Heart right ventricle (tissue), 16 donors: ENCODE measurements at regions of chr2 and their contacts with region 1.

Region 1: DNA sequence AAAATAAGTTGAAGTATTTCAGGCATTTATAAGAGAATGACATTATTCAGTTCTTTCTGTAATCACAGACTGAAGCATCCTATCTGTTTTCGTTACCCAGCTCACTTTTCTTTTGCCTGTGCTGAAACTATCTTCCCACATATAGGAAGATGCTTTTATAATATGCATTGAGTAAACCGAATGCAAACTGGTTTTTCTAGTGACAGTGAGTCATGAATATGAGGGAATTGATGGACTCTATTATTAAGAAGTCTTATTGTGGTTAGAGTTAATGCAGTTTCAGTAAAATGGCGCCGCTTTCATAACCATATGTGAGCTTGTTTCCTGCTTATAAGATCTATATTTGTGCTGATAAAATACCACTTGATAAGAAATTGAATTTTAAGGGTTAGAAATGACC is 59.2 kb downstream of the ACVR2A start:
- DNase-seq: no peak
- ATAC-seq: no peak
- H3K4me3 ChIP-seq: no peak overlapping the region
- H3K27ac ChIP-seq: no peak overlapping the region
- H3K4me1 ChIP-seq: no peaks in the 10 kb centered on the region
- H3K27me3 ChIP-seq: no peaks in the 10 kb centered on the region
- CTCF ChIP-seq: no peak

Region 2: DNA sequence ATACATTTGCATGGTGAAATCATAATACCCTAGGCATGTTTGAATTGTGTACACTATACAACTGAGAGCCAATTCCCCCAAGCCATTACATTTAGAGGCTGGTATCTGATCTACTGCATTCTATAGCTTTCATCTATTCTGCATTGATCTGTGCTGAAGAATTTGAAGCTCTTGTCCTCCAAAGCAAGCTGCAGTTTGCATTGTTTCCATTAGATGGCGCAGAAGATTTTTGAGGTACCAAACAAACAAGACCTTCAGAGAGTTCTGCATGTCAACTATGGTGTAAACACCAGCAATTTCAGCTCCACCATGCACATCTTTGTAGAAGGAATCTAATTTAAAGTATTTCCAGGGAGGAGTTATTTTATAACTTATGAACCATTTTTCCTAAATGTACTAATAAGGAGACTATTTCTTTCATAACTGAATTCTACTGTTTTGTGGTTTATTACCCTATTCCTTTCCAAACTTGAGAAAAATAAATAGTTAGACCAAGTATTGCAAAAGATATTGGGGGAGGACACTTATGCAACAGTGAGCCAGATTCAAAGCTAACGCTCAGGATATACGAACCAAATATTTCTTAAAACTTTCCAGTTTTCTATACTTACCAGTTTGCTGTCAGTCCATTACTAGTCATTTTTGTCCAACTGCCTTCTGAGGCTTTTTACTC is 821.1 kb before region 1 on chr2:
- intact Hi-C with region 1: loop called in 1 of 10 experiments (anchors 10 kb)
- DNase-seq: peak in 1 of 2 donors; percentile 55
- ATAC-seq: peak in 5 of 8 donors; percentile 38 to 69 (median 42)
- H3K4me3 ChIP-seq: no peak overlapping the region
- H3K27ac ChIP-seq: no peak overlapping the region
- H3K4me1 ChIP-seq: peaks cover 0 to 18% (median 0%) of the 10 kb centered on the region in 9 donors
- H3K27me3 ChIP-seq: no peaks in the 10 kb centered on the region
- CTCF ChIP-seq: peak; percentile 62 to 89 (median 84)

Region 3: GRCh38 chr2:147800316-147800715 is 103.7 kb before region 1 on chr2:
- intact Hi-C with region 1: no loop called
- DNase-seq: no peak
- ATAC-seq: no peak
- H3K4me3 ChIP-seq: no peak overlapping the region
- H3K27ac ChIP-seq: no peak overlapping the region
- H3K4me1 ChIP-seq: peaks cover 0 to 7% (median 0%) of the 10 kb centered on the region in 9 donors
- H3K27me3 ChIP-seq: no peaks in the 10 kb centered on the region
- CTCF ChIP-seq: no peak

Region 4: GRCh38 chr2:147829106-147829505 is 74.9 kb before region 1 on chr2:
- intact Hi-C with region 1: no loop called
- DNase-seq: no peak
- ATAC-seq: peak in 1 of 8 donors; percentile 33
- H3K4me3 ChIP-seq: no peak overlapping the region
- H3K27ac ChIP-seq: no peak overlapping the region
- H3K4me1 ChIP-seq: peaks cover 0 to 5% (median 0%) of the 10 kb centered on the region in 9 donors
- H3K27me3 ChIP-seq: no peaks in the 10 kb centered on the region
- CTCF ChIP-seq: no peak

Region 5: GRCh38 chr2:147855977-147856376 is 48.1 kb before region 1 on chr2:
- intact Hi-C with region 1: loop called in 1 of 10 experiments (anchors 10 kb)
- DNase-seq: no peak
- ATAC-seq: no peak
- H3K4me3 ChIP-seq: no peak overlapping the region
- H3K27ac ChIP-seq: no peak overlapping the region
- H3K4me1 ChIP-seq: peaks cover 0 to 67% (median 37%) of the 10 kb centered on the region in 9 donors
- H3K27me3 ChIP-seq: no peaks in the 10 kb centered on the region
- CTCF ChIP-seq: no peak